SK-N-SH (cell line): ENCODE measurements at regions of chr12 and their contacts with region 1.

Region 1: DNA sequence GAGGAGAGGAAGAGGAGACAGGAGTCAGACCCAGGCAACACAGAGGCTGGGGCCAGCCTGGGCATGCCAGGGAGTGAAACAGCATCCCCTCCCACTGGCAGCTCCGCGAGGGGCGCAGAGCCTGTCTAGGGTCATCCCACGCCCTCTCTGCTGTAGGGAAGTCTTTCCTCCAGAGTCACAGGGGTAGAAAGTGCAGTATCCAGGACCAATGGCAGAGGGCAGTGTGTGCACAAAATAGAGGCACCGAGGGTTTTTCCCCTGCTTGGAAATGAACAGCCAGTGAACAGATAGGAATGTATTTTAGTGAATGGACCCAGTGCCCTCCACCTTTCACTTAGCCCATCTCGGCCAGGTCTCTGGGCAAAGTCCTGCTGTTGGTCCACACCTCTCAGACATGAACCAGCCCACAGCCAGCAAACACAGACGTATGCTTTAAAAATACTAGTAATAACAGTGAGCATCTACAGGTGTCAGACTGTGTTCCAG is 9.4 kb upstream of the KRT74 start:
- DNase-seq: peak; percentile 76
- H3K4me3 ChIP-seq: peak overlapping the region in 1 of 2 experiments; percentile 25; a peak in 1 of 4 replicates
- H3K27ac ChIP-seq: no peak overlapping the region
- H3K4me1 ChIP-seq: no peaks in the 10 kb centered on the region
- H3K27me3 ChIP-seq: peaks cover 44% of the 10 kb centered on the region
- CTCF ChIP-seq: peak; percentile 67
- EP300 ChIP-seq: no peak
- RAD21 ChIP-seq: peak; percentile 77

Region 2: DNA sequence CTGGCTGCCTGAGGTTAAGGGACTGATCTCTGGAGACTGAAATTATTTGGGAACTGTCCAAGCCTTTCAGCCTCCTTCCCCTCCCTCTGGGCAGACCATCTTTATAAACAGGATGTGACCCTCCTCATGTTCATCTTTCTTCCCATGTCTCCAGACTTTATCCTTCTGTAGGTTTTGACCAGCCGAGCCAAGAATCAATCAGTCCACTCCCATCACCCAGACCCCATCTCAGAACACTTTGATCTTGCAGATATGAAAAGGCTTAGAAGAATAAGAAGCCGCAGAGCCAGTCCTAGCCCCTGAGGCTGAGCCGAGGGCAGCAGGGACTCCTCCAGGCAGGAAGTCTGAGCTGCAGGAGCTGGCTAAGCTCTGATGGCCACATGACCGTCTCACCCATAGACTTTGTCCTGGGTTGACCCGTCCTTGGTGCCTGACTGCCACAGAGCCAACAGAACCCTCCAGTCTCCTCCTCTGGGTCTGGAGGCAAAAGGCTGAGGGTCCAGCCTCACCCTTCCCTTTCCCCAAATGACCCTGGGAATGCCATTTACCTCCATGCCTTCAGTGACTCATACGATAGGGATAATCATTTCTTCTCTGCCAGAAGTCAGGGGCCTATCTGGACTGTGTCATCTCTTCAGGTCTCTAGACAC is 31.7 kb before region 1 on chr12:
- CTCF ChIA-PET with region 1: no interaction called
- POLR2A ChIA-PET with region 1: no interaction called
- DNase-seq: no peak
- H3K4me3 ChIP-seq: no peak overlapping the region
- H3K27ac ChIP-seq: no peak overlapping the region
- H3K4me1 ChIP-seq: no peaks in the 10 kb centered on the region
- H3K27me3 ChIP-seq: peaks cover 59% of the 10 kb centered on the region
- CTCF ChIP-seq: no peak
- EP300 ChIP-seq: no peak
- RAD21 ChIP-seq: no peak

Region 3: GRCh38 chr12:52865090-52865944 is 282.3 kb after region 1 on chr12:
- CTCF ChIA-PET with region 1: interaction called, 17 read pairs
- POLR2A ChIA-PET with region 1: no interaction called
- DNase-seq: peak; percentile 87
- H3K4me3 ChIP-seq: peak overlapping the region in 1 of 2 experiments; percentile 17; a peak in 1 of 4 replicates
- H3K27ac ChIP-seq: no peak overlapping the region
- H3K4me1 ChIP-seq: no peaks in the 10 kb centered on the region; a peak in 1 of 4 replicates
- H3K27me3 ChIP-seq: peaks cover 12% of the 10 kb centered on the region; the same call in 1 of the 2 replicates
- CTCF ChIP-seq: peak; percentile 78
- EP300 ChIP-seq: no peak
- RAD21 ChIP-seq: peak; percentile 69

Region 4: GRCh38 chr12:52870351-52871290 is 287.6 kb after region 1 on chr12:
- CTCF ChIA-PET with region 1: interaction called, 17 read pairs
- POLR2A ChIA-PET with region 1: interaction called, 3 read pairs
- DNase-seq: peak; percentile 84
- H3K4me3 ChIP-seq: no peak overlapping the region; a peak in 1 of 4 replicates
- H3K27ac ChIP-seq: peak overlapping the region in 1 of 2 experiments; percentile 69; a peak in 2 of 4 replicates
- H3K4me1 ChIP-seq: peaks cover 10 to 18% of the 10 kb centered on the region in 2 experiments; a peak in 3 of 4 replicates
- H3K27me3 ChIP-seq: no peaks in the 10 kb centered on the region
- CTCF ChIP-seq: peak; percentile 85
- EP300 ChIP-seq: no peak
- RAD21 ChIP-seq: peak; percentile 71